PC-9 (cell line): ENCODE measurements at regions of chr19 and their contacts with region 1.

Region 1: DNA sequence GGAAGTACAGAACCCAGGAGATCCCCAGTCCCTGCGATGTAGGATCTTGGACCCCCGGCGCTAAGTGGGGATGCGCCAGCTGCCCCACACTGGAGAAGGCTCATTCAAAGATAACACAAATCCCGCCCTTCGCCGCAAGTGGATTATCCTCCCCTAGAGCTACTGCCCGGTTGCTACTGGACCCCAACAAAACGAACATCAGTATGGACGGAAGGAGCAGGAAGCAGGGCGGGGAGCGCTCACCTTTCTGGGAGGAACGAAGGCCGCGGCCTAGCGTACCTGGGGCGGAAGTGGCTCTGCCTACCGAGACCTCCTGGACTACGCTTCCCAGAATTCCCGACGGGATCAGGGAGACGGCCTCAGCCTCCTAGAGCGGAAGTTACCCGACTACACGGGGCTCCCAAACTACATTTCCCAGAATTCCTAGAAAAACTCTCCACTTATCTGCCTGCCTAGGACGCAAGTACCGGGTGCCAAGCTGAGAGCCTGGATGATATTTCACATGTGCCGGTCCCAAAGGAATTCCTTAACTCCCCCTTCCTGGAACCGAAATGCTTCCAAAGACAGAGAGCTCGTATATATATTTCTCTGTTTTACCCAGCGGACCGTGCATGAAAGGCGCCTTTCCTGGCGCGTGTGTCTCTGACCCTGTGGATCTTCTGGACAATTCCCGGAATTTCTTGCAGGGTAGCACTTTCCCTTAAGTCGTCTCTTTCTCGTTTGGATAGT is at the start of gene ZNF112:
- DNase-seq: peak; percentile 87 to 94
- H3K4me3 ChIP-seq: peak within 1 kb of the TSS; percentile 86
- H3K27ac ChIP-seq: no peak within 1 kb of the TSS
- H3K4me1 ChIP-seq: peaks cover 7% of the 10 kb centered on the region; the same call in 1 of the 2 replicates
- H3K27me3 ChIP-seq: no peaks in the 10 kb centered on the region
- CTCF ChIP-seq: no peak
- total RNA-seq, gene ZNF112: 3.5 and 7.8 TPM in 2 replicates

Region 2: GRCh38 chr19:44401139-44402115 is 44.9 kb after region 1 on chr19 and contains the start of gene ZNF285:
- CTCF ChIA-PET with region 1: no interaction called
- POLR2A ChIA-PET with region 1: no interaction called
- intact Hi-C with region 1: loop called (anchors 10 kb)
- DNase-seq: peak; percentile 88 to 95
- H3K4me3 ChIP-seq: peak within 1 kb of the TSS; percentile 78
- H3K27ac ChIP-seq: no peak within 1 kb of the TSS
- H3K4me1 ChIP-seq: peaks cover 4% of the 10 kb centered on the region; the same call in 1 of the 2 replicates
- H3K27me3 ChIP-seq: peaks cover 7% of the 10 kb centered on the region; the same call in 1 of the 2 replicates
- CTCF ChIP-seq: no peak
- total RNA-seq, gene ZNF285: 3.0 and 3.5 TPM in 2 replicates

Region 3: DNA sequence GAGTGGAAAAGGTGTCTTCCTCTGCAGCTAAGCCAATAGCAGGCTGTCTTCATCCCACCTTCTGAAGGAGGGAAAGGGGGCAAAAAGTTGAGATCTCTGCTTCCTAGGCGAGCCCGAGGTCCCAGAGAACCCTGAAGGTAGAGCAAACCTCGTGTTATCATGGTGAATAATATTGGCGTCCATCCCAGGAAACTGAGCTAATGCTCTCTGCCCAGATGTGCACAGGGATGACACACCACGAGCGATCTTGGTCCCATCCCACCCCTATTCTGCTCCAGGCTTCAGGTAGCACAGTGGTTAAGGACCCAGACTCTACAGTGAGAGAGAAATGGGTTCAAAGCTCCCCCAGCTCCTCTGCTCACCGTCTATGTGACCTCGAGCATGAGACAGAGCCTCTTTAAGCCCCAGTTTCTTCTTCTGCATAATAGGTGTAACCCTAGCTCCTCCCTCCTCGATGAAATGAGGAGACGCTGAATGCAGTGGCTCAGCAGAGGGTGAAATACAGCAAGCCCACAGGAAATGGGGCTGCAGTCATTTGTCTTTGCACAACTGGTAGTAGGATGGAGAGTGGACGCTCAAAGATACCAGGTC is 182.8 kb after region 1 on chr19:
- CTCF ChIA-PET with region 1: no interaction called
- POLR2A ChIA-PET with region 1: no interaction called
- intact Hi-C with region 1: no loop called
- DNase-seq: no peak
- H3K4me3 ChIP-seq: no peak overlapping the region
- H3K27ac ChIP-seq: no peak overlapping the region
- H3K4me1 ChIP-seq: no peaks in the 10 kb centered on the region
- H3K27me3 ChIP-seq: peaks cover 24% of the 10 kb centered on the region; the same call in 1 of the 2 replicates
- CTCF ChIP-seq: no peak